Activated CD4-positive, alpha-beta T cell treated with anti-CD3 and anti-CD28 coated beads for 36 hours (primary cell): ENCODE measurements at regions of chr19 and their contacts with region 1.

Region 1: DNA sequence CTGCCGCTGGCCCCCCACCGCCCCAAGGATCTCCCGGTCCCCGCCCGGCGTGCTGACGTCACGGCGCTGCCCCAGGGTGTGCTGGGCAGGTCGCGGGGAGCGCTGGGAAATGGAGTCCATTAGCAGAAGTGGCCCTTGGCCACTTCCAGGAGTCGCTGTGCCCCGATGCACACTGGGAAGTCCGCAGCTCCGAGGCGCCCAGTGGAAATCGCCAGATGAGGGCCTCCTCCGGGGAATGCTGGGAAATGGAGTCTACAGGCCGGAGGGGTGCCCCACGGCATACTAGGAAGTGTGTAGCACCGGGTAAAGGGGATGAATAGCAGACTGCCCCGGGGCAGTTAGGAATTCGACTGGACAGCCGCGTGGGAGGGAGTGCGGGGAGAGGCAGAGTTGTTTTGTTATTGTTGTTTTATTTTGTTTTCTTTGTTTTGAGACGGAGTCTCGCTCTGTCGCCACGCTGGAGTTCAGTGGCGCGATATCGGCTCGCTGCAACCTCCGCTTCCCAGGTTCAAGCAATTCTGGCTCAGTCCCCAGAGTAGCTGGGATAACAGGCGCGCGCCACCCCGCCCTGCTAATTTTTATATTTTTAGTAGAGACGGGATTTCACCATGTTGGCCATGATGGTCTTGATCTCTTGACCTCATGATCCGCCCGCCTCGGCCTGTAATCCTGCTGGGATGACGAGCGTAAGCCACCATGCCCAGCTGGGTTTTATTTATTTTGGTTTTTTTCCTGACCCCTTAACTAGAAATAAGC is at the start of gene PPP1R12C:
- DNase-seq: peak; percentile 99
- ATAC-seq: peak; percentile 96
- H3K4me3 Mint-ChIP-seq: peak within 1 kb of the TSS; percentile 95
- H3K27ac Mint-ChIP-seq: peak within 1 kb of the TSS; percentile 97
- H3K4me1 Mint-ChIP-seq: peaks cover 24% of the 10 kb centered on the region
- H3K27me3 Mint-ChIP-seq: peaks cover 2% of the 10 kb centered on the region
- total RNA-seq, gene PPP1R12C: 66.1 to 69.8 TPM

Region 2: DNA sequence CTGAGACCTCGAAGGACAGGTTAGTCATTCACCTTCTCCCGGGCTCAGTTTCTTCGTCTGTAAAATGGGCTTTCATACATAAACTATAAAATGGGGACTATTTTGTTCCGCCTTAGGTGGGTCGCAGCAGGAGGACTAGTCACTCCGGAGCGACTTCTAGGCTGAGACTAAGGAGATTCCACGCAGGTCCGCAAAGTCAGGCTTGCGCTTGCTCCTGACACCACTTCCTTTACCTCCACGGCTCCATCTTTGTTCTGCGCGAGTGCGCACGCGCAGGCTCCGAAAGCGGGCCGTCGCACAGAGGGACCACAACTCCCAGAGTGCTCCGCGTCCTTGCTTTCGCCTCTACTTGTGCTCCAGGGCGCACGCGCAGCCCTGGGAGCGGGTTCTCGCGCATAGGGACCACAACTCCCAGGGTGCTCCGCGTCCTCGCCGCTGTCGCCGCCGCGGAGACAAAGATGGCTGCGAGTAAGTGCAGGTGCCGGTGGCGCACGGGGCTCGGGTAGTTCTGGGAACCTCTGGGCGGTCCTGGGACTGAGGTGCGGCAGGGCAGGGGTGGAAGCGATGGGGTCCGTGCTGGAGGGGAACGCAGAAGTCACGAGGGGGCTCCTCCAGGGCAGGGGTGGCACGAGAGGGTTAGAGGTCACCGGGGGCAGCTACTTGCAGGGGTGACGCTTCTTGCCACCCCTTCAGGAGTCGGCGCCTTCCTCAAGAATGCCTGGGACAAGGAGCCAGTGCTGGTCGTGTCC is 1015.2 kb before region 1 on chr19 and contains the start of gene NDUFA3:
- CTCF ChIA-PET with region 1: no interaction called
- POLR2A ChIA-PET with region 1: no interaction called
- intact Hi-C with region 1: loop called in 1 of 2 experiments (anchors 5 kb)
- DNase-seq: peak; percentile 98
- ATAC-seq: peak; percentile 99
- H3K4me3 Mint-ChIP-seq: peak within 1 kb of the TSS; percentile 93
- H3K27ac Mint-ChIP-seq: peak within 1 kb of the TSS; percentile 96
- H3K4me1 Mint-ChIP-seq: peaks cover 16% of the 10 kb centered on the region
- H3K27me3 Mint-ChIP-seq: no peaks in the 10 kb centered on the region
- total RNA-seq, gene NDUFA3: 99.9 to 158 TPM

Region 3: GRCh38 chr19:55080968-55081772 is 36.6 kb before region 1 on chr19:
- CTCF ChIA-PET with region 1: no interaction called
- POLR2A ChIA-PET with region 1: no interaction called
- intact Hi-C with region 1: loop called in 1 of 2 experiments (anchors 1 kb)
- DNase-seq: peak; percentile 95
- ATAC-seq: peak; percentile 71
- H3K4me3 Mint-ChIP-seq: peak overlapping the region; percentile 69
- H3K27ac Mint-ChIP-seq: peak overlapping the region; percentile 31
- H3K4me1 Mint-ChIP-seq: peaks cover 22% of the 10 kb centered on the region
- H3K27me3 Mint-ChIP-seq: peaks cover 56% of the 10 kb centered on the region

Region 4: GRCh38 chr19:55178781-55179599 is 61.2 kb after region 1 on chr19:
- CTCF ChIA-PET with region 1: interaction called, 3 read pairs
- POLR2A ChIA-PET with region 1: no interaction called
- intact Hi-C with region 1: loop called in 1 of 2 experiments (anchors 1 kb)
- DNase-seq: peak; percentile 95
- ATAC-seq: peak; percentile 81
- H3K4me3 Mint-ChIP-seq: peak overlapping the region; percentile 61
- H3K27ac Mint-ChIP-seq: no peak overlapping the region
- H3K4me1 Mint-ChIP-seq: peaks cover 20% of the 10 kb centered on the region
- H3K27me3 Mint-ChIP-seq: peaks cover 49% of the 10 kb centered on the region

Region 5: DNA sequence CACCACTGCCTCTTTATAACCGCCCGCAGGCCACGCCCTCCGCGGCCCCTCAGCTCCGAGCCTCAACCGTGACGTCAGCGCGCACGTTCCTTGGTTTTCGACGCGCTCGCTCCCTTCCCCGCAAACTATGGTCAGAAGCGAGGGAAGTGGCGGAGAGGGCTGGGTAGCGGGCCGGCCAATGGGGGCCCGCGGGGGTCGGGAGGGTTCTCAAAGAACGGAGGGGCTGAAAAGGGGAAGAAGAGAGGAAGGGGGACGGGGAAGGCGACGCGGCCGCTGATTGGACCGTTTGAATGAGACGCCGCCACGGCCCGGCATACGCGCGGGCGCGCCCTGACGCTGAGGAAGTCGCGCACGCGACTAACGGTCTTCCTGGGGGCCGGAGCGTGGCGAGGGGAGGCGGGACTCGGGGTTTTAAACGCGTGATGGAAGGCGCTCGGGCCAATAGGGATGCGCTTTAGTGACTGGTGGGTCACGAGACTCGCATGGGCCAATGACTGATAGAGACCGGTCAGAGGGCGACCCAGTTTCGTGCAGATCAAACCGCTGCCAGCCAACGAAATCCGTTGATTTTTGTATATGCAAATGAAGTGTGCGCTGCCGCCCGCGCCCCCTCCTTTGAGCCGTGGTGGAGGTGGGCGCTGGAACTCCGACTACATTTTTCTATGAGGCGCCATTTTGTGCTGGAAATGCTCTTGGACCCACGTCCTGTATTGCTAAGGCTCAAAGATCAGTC is 290.2 kb after region 1 on chr19:
- CTCF ChIA-PET with region 1: no interaction called
- POLR2A ChIA-PET with region 1: interaction called, 3 read pairs
- intact Hi-C with region 1: loop called in 1 of 2 experiments (anchors 1 kb)
- DNase-seq: peak; percentile 98
- ATAC-seq: peak; percentile 96
- H3K4me3 Mint-ChIP-seq: peak overlapping the region; percentile 90
- H3K27ac Mint-ChIP-seq: peak overlapping the region; percentile 96
- H3K4me1 Mint-ChIP-seq: peaks cover 22% of the 10 kb centered on the region
- H3K27me3 Mint-ChIP-seq: no peaks in the 10 kb centered on the region

Region 6: GRCh38 chr19:55643348-55644176 is 525.7 kb after region 1 on chr19 and contains the start of gene ZNF581:
- CTCF ChIA-PET with region 1: no interaction called
- POLR2A ChIA-PET with region 1: no interaction called
- intact Hi-C with region 1: loop called in 1 of 2 experiments (anchors 5 kb)
- DNase-seq: peak; percentile 91
- ATAC-seq: peak; percentile 55
- H3K4me3 Mint-ChIP-seq: peak within 1 kb of the TSS; percentile 93
- H3K27ac Mint-ChIP-seq: peak within 1 kb of the TSS; percentile 99
- H3K4me1 Mint-ChIP-seq: peaks cover 44% of the 10 kb centered on the region
- H3K27me3 Mint-ChIP-seq: no peaks in the 10 kb centered on the region
- total RNA-seq, gene ZNF581: 18.9 to 26.9 TPM